H1 (cell line): ENCODE measurements at regions of chr7 and their contacts with region 1.

Region 1: GRCh38 chr7:101126651-101127280 is at the start of gene SERPINE1:
- DNase-seq: peak in 1 of 2 experiments; percentile 73
- H3K4me3 ChIP-seq: peak within 1 kb of the TSS in 3 of 4 experiments; percentile 9 to 34 (median 29); a peak in 3 of 8 replicates
- H3K27ac ChIP-seq: no peak within 1 kb of the TSS
- H3K4me1 ChIP-seq: peaks cover 11 to 19% (median 12%) of the 10 kb centered on the region in 4 experiments
- H3K27me3 ChIP-seq: no peaks in the 10 kb centered on the region; a peak in 1 of 7 replicates
- CTCF ChIP-seq: peak; percentile 6 to 39 (median 16); a peak in 3 of 4 replicates
- EP300 ChIP-seq: no peak
- POLR2A ChIP-seq: no peak
- RAD21 ChIP-seq: no peak
- total RNA-seq, gene SERPINE1: 5.6 and 6.8 TPM in 2 replicates

Region 2: GRCh38 chr7:101094416-101095375 is 32.1 kb before region 1 on chr7:
- CTCF ChIA-PET with region 1: interaction called, 25 read pairs
- POLR2A ChIA-PET with region 1: interaction called, 15 read pairs
- DNase-seq: peak; percentile 51 to 92
- H3K4me3 ChIP-seq: no peak overlapping the region
- H3K27ac ChIP-seq: no peak overlapping the region
- H3K4me1 ChIP-seq: peaks cover 0 to 6% (median 3%) of the 10 kb centered on the region in 4 experiments; a peak in 4 of 7 replicates
- H3K27me3 ChIP-seq: no peaks in the 10 kb centered on the region
- CTCF ChIP-seq: peak; percentile 73 to 78 (median 75)
- EP300 ChIP-seq: no peak
- POLR2A ChIP-seq: no peak
- RAD21 ChIP-seq: peak; percentile 67 to 75

Region 3: GRCh38 chr7:101099969-101100781 is 26.6 kb before region 1 on chr7:
- CTCF ChIA-PET with region 1: interaction called, 25 read pairs
- POLR2A ChIA-PET with region 1: interaction called, 15 read pairs
- DNase-seq: peak; percentile 72 to 92
- H3K4me3 ChIP-seq: no peak overlapping the region
- H3K27ac ChIP-seq: peak overlapping the region; percentile 27; the same call in 1 of the 2 replicates
- H3K4me1 ChIP-seq: peaks cover 0 to 17% (median 10%) of the 10 kb centered on the region in 4 experiments; a peak in 6 of 7 replicates
- H3K27me3 ChIP-seq: no peaks in the 10 kb centered on the region
- CTCF ChIP-seq: no peak
- EP300 ChIP-seq: peak in 1 of 2 experiments; percentile 72; a peak in 2 of 3 replicates
- POLR2A ChIP-seq: peak in 1 of 2 experiments; percentile 65; a peak in 1 of 3 replicates
- RAD21 ChIP-seq: no peak